ENCODE measurements at regions of chr1 and their contacts with region 1.

Region 1: GRCh38 chr1:168082008-168082876 is 54.5 kb downstream of the GPR161 start:
- DNase-seq: peak; percentile 82
- H3K4me3 Mint-ChIP-seq: no peak overlapping the region
- H3K27ac Mint-ChIP-seq: no peak overlapping the region
- H3K4me1 Mint-ChIP-seq: no peaks in the 10 kb centered on the region
- H3K27me3 Mint-ChIP-seq: no peaks in the 10 kb centered on the region

Region 2: GRCh38 chr1:167715157-167715999 is 366.9 kb before region 1 on chr1:
- CTCF ChIA-PET with region 1: interaction called, 9 read pairs
- POLR2A ChIA-PET with region 1: no interaction called
- intact Hi-C with region 1: loop called (anchors 5 kb)
- DNase-seq: peak; percentile 93
- H3K4me3 Mint-ChIP-seq: peak overlapping the region; percentile 80
- H3K27ac Mint-ChIP-seq: peak overlapping the region; percentile 93
- H3K4me1 Mint-ChIP-seq: peaks cover 35% of the 10 kb centered on the region
- H3K27me3 Mint-ChIP-seq: peaks cover 7% of the 10 kb centered on the region

Region 3: GRCh38 chr1:168054117-168054516 is 28.1 kb before region 1 on chr1:
- CTCF ChIA-PET with region 1: interaction called, 19 read pairs
- POLR2A ChIA-PET with region 1: no interaction called
- intact Hi-C with region 1: no loop called
- DNase-seq: no peak
- H3K4me3 Mint-ChIP-seq: no peak overlapping the region
- H3K27ac Mint-ChIP-seq: no peak overlapping the region
- H3K4me1 Mint-ChIP-seq: no peaks in the 10 kb centered on the region
- H3K27me3 Mint-ChIP-seq: no peaks in the 10 kb centered on the region

Region 4: DNA sequence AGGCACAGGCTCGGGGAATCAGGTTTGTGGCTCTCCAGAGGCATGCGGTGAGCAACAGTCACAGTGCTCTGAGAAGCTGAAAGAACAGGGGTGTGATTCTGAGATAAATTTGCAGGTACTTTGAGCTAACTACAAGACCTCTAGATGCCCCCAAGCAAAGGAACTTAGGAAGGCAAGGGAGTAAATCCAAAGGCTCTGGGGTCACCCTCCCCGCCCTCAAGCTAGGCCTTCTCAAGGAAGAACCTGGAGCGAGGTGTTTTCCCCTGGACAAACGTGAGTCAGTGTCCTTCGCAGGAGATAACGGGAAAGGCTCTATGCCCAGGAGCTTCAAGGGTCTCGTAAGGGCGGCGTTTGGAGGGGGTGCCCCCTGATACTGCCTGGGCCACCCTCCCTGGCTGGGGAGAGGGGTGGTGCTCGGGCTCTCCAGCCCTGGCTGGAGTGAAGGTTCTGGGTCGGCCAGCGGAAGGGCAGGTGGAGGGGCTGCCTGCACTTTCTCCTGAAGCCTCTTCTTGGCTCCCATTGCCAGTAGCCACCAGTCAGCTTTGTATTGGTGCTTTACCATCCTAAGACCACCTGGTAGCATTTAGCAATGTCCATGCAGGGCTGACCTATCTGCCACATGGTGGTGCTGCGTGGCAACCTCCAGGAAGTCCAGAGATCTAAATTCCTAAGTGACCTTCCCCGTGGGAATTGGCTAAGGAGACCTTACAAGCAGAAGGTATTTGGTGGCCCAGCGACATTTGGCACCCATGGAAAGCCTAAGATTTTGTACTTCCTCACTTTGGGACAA is 10.5 kb after region 1 on chr1:
- CTCF ChIA-PET with region 1: interaction called, 28 read pairs
- POLR2A ChIA-PET with region 1: no interaction called
- intact Hi-C with region 1: no loop called
- DNase-seq: no peak
- H3K4me3 Mint-ChIP-seq: no peak overlapping the region
- H3K27ac Mint-ChIP-seq: no peak overlapping the region
- H3K4me1 Mint-ChIP-seq: no peaks in the 10 kb centered on the region
- H3K27me3 Mint-ChIP-seq: no peaks in the 10 kb centered on the region

Region 5: GRCh38 chr1:168321945-168322344 is 239.7 kb after region 1 on chr1:
- CTCF ChIA-PET with region 1: interaction called, 4 read pairs
- POLR2A ChIA-PET with region 1: no interaction called
- intact Hi-C with region 1: loop called (anchors 1 kb)
- DNase-seq: no peak
- H3K4me3 Mint-ChIP-seq: no peak overlapping the region
- H3K27ac Mint-ChIP-seq: no peak overlapping the region
- H3K4me1 Mint-ChIP-seq: peaks cover 10% of the 10 kb centered on the region
- H3K27me3 Mint-ChIP-seq: no peaks in the 10 kb centered on the region